PC-3 (cell line): ENCODE measurements at regions of chr1 and their contacts with region 1.

Region 1: DNA sequence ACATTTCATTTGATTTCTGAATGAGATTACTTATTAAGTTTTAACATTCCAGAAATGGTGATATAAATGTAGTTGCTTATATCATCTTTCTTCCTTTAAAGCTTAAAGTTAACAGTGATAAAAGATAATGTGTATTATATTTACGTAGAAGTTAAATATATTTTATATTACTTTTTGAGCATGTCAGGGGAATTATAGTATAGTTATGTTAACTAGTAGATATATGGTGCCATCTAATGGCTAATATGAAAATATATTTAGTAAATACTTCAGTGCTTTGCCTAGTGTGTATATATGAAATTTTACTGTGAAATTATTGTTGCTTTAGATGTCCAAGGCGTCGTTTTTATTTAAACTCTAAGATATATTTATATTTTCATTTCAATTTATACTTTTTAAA is 51.5 kb downstream of the SYT14 start:
- DNase-seq: peak; percentile 57
- ATAC-seq: peak; percentile 73
- H3K4me3 ChIP-seq: no peak overlapping the region
- H3K27ac ChIP-seq: peak overlapping the region; percentile 32; the same call in 1 of the 2 replicates
- H3K4me1 ChIP-seq: peaks cover 14% of the 10 kb centered on the region
- H3K27me3 ChIP-seq: no peaks in the 10 kb centered on the region
- CTCF ChIP-seq: peak; percentile 53; the same call in 1 of the 2 replicates

Region 2: DNA sequence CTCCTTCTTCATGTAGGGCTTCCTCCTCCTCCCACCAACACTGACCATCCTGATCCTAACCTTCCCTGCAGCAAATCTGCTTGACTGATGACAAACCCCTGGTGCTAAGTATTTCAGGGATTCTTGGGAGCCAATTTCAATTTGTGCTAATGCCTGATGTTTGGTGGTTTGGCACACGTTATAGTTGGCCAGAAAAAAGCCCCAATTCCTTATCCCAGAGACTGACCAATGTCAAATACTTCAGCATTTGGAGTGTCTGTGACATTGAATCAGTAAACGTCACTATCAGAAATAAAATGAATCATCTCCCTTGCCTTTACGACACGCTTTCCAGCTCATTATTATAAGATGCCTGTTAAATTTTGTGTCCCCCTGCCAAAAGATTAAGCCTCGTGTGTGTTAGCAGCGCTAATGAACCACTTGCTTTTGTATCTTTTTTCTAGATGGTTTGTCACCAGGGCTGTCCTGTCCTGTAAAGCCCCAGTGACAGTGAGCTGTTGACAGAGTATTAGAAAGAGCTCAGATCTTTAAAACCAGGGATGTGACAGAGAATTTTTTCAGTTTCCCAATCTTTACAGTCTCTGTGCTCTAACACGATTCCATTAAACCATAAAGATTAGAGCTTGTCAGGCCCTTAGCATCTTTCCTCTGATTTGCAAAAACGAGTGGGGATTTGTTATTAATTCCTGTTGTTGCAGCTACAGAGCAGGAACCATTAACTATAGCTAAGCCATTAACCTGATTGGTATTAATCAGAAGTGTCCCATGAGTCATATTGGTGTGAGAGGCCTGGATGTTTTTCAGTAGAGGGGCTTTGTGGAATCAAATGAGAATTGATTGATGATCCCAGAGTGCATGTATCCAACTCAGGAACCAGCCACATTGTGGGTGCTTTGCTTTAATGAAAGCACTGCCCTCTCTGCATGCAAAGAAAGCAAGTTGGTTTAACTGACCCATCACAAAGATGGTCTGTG is 1080.2 kb before region 1 on chr1:
- CTCF ChIA-PET with region 1: no interaction called
- POLR2A ChIA-PET with region 1: no interaction called
- intact Hi-C with region 1: no loop called
- DNase-seq: no peak
- ATAC-seq: no peak
- H3K4me3 ChIP-seq: no peak overlapping the region
- H3K27ac ChIP-seq: no peak overlapping the region
- H3K4me1 ChIP-seq: peaks cover 4% of the 10 kb centered on the region; the same call in 1 of the 2 replicates
- H3K27me3 ChIP-seq: no peaks in the 10 kb centered on the region
- CTCF ChIP-seq: no peak

Region 3: GRCh38 chr1:209643285-209644020 is 346.1 kb before region 1 on chr1:
- CTCF ChIA-PET with region 1: no interaction called
- POLR2A ChIA-PET with region 1: no interaction called
- intact Hi-C with region 1: no loop called
- DNase-seq: no peak
- ATAC-seq: no peak
- H3K4me3 ChIP-seq: no peak overlapping the region
- H3K27ac ChIP-seq: no peak overlapping the region
- H3K4me1 ChIP-seq: peaks cover 49% of the 10 kb centered on the region
- H3K27me3 ChIP-seq: no peaks in the 10 kb centered on the region
- CTCF ChIP-seq: no peak

Region 4: GRCh38 chr1:209860293-209860881 is 129.1 kb before region 1 on chr1:
- CTCF ChIA-PET with region 1: interaction called, 17 read pairs
- POLR2A ChIA-PET with region 1: no interaction called
- intact Hi-C with region 1: loop called (anchors 1 kb)
- DNase-seq: peak; percentile 94
- ATAC-seq: peak; percentile 96
- H3K4me3 ChIP-seq: no peak overlapping the region
- H3K27ac ChIP-seq: no peak overlapping the region
- H3K4me1 ChIP-seq: peaks cover 4% of the 10 kb centered on the region; the same call in 1 of the 2 replicates
- H3K27me3 ChIP-seq: no peaks in the 10 kb centered on the region
- CTCF ChIP-seq: peak; percentile 93

Region 5: GRCh38 chr1:209875515-209875914 is 114.0 kb before region 1 on chr1:
- CTCF ChIA-PET with region 1: interaction called, 3 read pairs
- POLR2A ChIA-PET with region 1: no interaction called
- intact Hi-C with region 1: loop called (anchors 1 kb)
- DNase-seq: peak; percentile 72
- ATAC-seq: peak; percentile 47
- H3K4me3 ChIP-seq: no peak overlapping the region
- H3K27ac ChIP-seq: no peak overlapping the region
- H3K4me1 ChIP-seq: peaks cover 46% of the 10 kb centered on the region
- H3K27me3 ChIP-seq: no peaks in the 10 kb centered on the region
- CTCF ChIP-seq: peak; percentile 78

Region 6: DNA sequence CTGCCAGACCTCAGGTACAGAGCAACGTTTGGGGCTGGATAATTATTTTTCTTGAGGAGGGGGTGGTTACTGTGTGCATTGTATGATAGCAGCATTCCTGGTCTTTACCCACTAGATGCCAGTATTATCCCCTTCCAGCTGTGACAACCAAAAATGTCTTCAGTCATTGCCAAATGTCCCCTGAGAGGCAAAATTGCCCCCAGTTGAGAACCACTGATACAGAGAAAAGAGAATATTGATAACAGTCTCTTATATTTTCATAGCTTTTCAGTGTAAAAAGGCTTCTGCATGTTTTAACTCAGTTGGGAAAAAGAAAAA is 103.3 kb before region 1 on chr1:
- CTCF ChIA-PET with region 1: no interaction called
- POLR2A ChIA-PET with region 1: no interaction called
- intact Hi-C with region 1: loop called (anchors 1 kb)
- DNase-seq: peak; percentile 58
- ATAC-seq: no peak
- H3K4me3 ChIP-seq: no peak overlapping the region
- H3K27ac ChIP-seq: no peak overlapping the region
- H3K4me1 ChIP-seq: peaks cover 41% of the 10 kb centered on the region
- H3K27me3 ChIP-seq: no peaks in the 10 kb centered on the region
- CTCF ChIP-seq: peak; percentile 73

Region 7: DNA sequence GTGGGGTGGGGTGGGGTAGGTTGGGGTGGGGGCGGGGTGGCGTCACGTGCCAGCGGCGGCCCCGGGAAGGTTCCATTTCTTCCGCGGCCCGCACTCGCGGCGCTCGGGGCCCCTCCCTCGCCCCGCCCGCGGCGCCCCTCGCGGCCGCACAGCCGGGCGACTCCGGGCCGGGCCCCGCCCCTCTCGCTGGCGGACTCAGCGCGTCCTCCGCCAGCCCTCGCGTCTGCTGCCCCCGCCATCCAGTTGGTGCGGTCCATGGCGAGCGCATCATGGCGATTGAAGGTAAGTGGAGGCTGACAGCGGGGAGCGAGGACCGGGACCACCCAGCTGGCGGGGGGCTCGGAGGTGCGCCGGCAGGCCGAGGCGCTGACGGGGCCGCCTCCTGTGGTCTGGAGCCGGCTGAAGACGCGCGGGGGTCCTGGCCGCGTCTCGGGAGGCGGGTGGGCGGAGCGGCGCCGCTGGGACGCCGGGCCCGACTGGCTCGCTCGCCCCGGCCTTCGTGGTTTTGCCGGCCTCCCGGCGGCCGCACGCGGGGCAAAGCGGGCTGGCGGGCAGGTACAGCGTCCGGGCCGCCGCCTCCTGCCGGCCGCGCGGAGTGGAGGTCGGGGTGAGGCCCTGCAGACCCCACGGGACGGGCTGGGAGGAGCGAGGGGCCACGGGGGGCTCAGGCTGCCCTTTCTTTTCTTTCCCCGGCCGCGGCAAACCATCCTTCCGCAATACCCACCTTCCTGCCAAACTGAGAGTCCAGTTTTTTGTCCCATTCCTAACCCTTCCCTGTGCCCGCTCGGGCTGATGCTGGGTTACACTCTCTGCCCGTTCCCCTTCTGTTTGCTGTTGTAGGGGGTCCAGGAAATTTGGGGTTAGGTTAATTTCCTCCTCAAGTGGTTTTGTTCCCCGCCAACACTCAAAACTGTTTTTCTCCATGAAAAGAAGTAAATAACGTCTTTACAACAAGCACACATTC is 51.2 kb before region 1 on chr1 and contains the start of gene SYT14:
- CTCF ChIA-PET with region 1: no interaction called
- POLR2A ChIA-PET with region 1: no interaction called
- intact Hi-C with region 1: loop called (anchors 5 kb)
- DNase-seq: peak; percentile 63
- ATAC-seq: peak; percentile 82
- H3K4me3 ChIP-seq: peak within 1 kb of the TSS; percentile 65
- H3K27ac ChIP-seq: no peak within 1 kb of the TSS
- H3K4me1 ChIP-seq: 0 out of 2 replicates have a peak, but pooled peaks cover 9% of the 10 kb centered on the region
- H3K27me3 ChIP-seq: peaks cover 40% of the 10 kb centered on the region
- CTCF ChIP-seq: peak; percentile 29; the same call in 1 of the 2 replicates
- total RNA-seq, gene SYT14: 3.5 and 5.2 TPM in 2 replicates

Region 8: DNA sequence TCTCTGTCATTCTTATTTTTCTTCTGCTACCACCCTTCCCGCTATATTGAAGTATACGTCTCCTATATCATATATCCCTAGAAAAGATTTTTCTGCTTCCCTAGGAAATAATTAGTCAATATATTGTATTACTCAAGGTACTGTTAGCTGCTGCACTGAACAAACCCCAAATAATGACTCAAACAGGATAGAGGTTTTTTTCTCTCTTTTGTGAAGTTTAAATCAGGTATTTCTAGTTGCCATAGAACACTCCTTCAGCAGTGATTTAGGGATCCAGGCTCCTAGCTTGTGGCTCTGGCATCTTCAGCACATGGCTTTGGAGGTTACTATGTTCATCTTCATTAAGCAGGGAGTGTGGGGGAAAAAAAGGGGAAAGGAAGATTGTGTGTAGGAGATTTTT is 33.4 kb before region 1 on chr1:
- CTCF ChIA-PET with region 1: no interaction called
- POLR2A ChIA-PET with region 1: no interaction called
- intact Hi-C with region 1: loop called (anchors 2 kb)
- DNase-seq: peak; percentile 84
- ATAC-seq: peak; percentile 94
- H3K4me3 ChIP-seq: no peak overlapping the region
- H3K27ac ChIP-seq: peak overlapping the region; percentile 63
- H3K4me1 ChIP-seq: peaks cover 32% of the 10 kb centered on the region
- H3K27me3 ChIP-seq: no peaks in the 10 kb centered on the region
- CTCF ChIP-seq: no peak

Region 9: DNA sequence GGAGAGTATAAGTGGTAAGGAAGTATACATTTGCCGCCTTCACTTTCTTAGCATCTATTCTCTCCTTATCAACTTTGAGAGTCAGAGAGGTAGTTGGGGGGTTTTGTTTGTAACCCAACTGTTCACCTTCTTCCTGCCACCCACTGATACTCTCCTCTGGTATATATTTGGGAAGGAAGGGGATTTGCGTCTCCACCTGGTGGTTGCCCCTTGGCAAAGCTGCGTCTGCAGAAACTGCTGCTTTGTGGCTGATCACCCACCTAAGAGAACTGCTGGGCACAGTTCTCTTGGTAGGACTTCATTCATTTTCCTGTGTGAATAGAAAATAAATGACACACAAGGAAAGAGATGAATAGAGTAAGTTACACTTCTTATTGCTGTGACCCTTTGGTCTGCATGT is 35.5 kb after region 1 on chr1:
- CTCF ChIA-PET with region 1: no interaction called
- POLR2A ChIA-PET with region 1: no interaction called
- intact Hi-C with region 1: no loop called
- DNase-seq: no peak
- ATAC-seq: no peak
- H3K4me3 ChIP-seq: no peak overlapping the region
- H3K27ac ChIP-seq: no peak overlapping the region
- H3K4me1 ChIP-seq: no peaks in the 10 kb centered on the region
- H3K27me3 ChIP-seq: no peaks in the 10 kb centered on the region
- CTCF ChIP-seq: peak; percentile 38